Mucosa of descending colon (tissue), 3 donors: ENCODE measurements at regions of chr4 and their contacts with region 1.

Region 1: GRCh38 chr4:145481164-145481941 is at the start of gene SMAD1:
- DNase-seq: peak; percentile 84 to 90 (median 87)
- ATAC-seq: peak; percentile 93
- H3K4me3 ChIP-seq: peak within 1 kb of the TSS; percentile 83
- H3K4me1 ChIP-seq: peaks cover 4% of the 10 kb centered on the region
- CTCF ChIP-seq: no peak
- total RNA-seq, gene SMAD1: 34.9 to 47.4 (median 39.3) TPM

Region 2: DNA sequence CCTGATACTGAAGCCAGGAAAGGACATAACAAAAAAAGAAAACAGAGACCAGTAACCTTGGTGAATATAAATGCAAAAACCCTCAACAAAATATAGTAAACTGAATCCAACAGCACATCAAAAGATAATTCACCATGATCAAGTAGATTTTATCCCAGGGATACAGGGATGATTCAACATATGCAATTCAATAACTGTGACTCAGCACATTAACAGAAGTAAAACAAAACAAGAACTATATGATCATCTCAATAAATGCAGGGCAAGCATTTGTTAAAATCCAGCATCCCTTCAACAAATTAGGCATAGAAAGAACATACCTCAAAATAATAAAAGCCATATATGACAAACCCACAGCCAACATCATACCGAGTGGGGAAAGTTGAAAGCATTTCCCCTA is 723.4 kb before region 1 on chr4:
- intact Hi-C with region 1: no loop called
- DNase-seq: no peak
- ATAC-seq: no peak
- H3K4me3 ChIP-seq: no peak overlapping the region
- H3K4me1 ChIP-seq: no peaks in the 10 kb centered on the region
- CTCF ChIP-seq: no peak

Region 3: DNA sequence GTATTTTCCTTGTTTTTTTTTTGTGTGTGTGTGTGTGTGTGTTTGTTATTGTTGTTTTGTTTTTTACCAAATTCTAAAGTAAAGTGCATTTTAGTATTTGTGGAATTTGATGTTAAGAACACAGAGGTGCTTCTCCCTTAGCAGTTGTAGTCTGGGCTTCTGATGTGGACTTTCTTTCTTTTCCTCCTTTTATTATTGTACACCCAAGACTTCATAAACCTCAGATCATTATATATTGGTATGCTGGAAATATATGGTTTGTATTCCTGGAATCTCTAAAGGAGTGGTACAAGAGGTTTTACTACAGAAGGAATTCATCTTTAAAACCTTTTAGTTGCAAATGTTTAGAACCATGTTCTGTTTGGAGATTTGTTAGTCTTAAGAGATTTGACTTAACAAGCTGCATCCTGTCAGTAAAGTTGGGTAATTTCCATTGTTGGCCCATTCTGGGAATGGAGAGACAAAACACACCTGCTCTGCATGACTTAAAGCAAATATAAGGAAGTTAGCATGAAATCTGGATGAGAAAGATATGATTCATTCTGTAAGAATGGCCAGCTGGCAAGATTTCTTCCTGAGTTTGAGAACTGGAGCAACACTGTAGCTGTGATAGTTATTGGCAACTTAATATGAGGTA is 64.3 kb after region 1 on chr4:
- intact Hi-C with region 1: loop called in 1 of 2 experiments (anchors 10 kb)
- DNase-seq: peak in 1 of 3 donors; percentile 45
- ATAC-seq: peak; percentile 95
- H3K4me3 ChIP-seq: no peak overlapping the region
- H3K4me1 ChIP-seq: peaks cover 14% of the 10 kb centered on the region
- CTCF ChIP-seq: no peak